Transverse colon (tissue), 4 donors: ENCODE measurements at regions of chr3 and their contacts with region 1.

Region 1: DNA sequence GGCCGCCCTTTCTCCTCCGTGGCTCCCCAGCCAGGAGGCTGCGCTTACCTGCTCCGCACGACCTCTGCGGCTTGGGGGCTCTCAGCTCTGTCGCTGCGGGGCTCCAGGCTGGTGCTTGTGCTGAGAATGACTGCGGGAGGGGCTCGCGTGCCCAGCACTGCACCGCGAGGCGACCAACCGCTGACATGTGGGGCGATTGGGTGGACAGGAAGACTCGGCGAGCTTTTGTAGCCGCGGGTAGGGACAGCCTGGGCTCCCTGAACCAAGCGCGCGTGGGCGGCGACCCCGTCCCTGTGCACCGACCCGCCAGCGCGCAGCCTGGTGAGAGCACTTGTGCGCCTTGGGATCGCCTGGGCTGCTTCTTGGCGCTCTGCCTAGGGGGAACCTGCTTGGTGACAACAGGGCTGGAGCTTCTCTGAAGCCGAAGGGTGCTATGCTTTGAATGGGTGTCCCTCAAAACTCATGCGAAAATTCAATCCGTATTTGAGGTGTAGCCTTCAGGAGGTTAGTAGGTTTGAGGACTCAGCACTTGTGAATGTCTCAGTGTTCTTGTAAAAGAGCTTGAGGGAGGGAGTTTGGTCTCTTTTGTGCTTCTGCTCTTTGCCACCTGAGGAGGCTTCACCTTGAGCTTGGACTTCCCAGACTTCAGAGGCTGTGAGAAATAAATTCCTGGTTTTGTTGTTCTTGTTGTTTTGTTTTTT is 50.4 kb downstream of the IL12A start:
- DNase-seq: no peak
- H3K4me3 ChIP-seq: peak overlapping the region in 2 of 4 donors; percentile 17 to 40
- H3K27ac ChIP-seq: no peak overlapping the region
- H3K4me1 ChIP-seq: peaks cover 0 to 4% (median 2%) of the 10 kb centered on the region in 4 donors
- H3K27me3 ChIP-seq: peaks cover 25% of the 10 kb centered on the region
- CTCF ChIP-seq: no peak
- EP300 ChIP-seq: no peak
- POLR2A ChIP-seq: no peak

Region 2: GRCh38 chr3:160163229-160163878 is 124.3 kb after region 1 on chr3:
- in situ Hi-C with region 1: no loop called
- intact Hi-C with region 1: loop called (anchors 10 kb)
- DNase-seq: no peak
- H3K4me3 ChIP-seq: no peak overlapping the region
- H3K27ac ChIP-seq: no peak overlapping the region
- H3K4me1 ChIP-seq: peaks cover 0 to 5% (median 1%) of the 10 kb centered on the region in 4 donors
- H3K27me3 ChIP-seq: no peaks in the 10 kb centered on the region
- CTCF ChIP-seq: peak; percentile 40 to 61 (median 45)
- EP300 ChIP-seq: no peak
- POLR2A ChIP-seq: no peak

Region 3: GRCh38 chr3:160343132-160343531 is 304.1 kb after region 1 on chr3:
- in situ Hi-C with region 1: loop called in 2 of 4 experiments (anchors 10 to 25 kb)
- intact Hi-C with region 1: no loop called
- DNase-seq: no peak
- H3K4me3 ChIP-seq: no peak overlapping the region
- H3K27ac ChIP-seq: no peak overlapping the region
- H3K4me1 ChIP-seq: no peaks in the 10 kb centered on the region
- H3K27me3 ChIP-seq: no peaks in the 10 kb centered on the region
- CTCF ChIP-seq: peak; percentile 28 to 48 (median 41)
- EP300 ChIP-seq: no peak
- POLR2A ChIP-seq: no peak

Region 4: DNA sequence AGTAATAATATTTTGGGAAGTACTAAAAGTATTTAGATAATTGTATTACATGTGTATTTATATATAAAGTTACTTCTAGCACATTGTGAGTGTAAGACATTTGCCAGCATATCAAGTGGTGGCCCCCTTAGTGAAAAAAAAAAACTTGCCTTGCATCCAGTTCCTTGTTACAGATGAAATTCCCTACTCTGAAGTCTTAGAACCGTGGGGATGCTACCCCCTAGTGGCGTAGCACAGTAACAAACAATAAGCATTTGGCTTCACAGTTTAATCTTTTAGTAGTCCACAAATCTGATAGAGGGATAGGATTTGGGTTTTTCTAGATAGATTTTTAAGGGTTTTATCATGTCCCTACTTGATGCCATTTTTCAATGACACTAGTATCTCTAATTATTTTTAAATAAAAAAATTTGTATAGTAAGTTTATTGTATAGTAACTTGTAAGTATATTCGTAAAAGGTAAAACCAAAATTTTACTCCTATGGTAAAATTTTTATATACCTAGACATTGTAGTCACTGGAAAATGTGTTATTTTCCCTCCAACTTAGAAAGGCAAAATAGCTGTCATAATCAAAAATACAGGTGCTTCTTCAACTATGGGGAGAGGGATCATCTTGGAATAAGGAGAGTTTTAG is 374.7 kb after region 1 on chr3:
- in situ Hi-C with region 1: loop called in 1 of 4 experiments (anchors 10 kb)
- intact Hi-C with region 1: no loop called
- DNase-seq: peak; percentile 65
- H3K4me3 ChIP-seq: no peak overlapping the region
- H3K27ac ChIP-seq: no peak overlapping the region
- H3K4me1 ChIP-seq: no peaks in the 10 kb centered on the region
- H3K27me3 ChIP-seq: no peaks in the 10 kb centered on the region
- CTCF ChIP-seq: peak; percentile 78 to 91 (median 82)
- EP300 ChIP-seq: no peak
- POLR2A ChIP-seq: no peak